ENCODE measurements at regions of chr12 and their contacts with region 1.

Region 1: GRCh38 chr12:6703631-6704030 is 3.0 kb upstream of the PIANP start:
- DNase-seq: no peak
- ATAC-seq: peak; percentile 46
- H3K4me3 ChIP-seq: no peak overlapping the region
- H3K27ac ChIP-seq: no peak overlapping the region
- H3K4me1 ChIP-seq: no peaks in the 10 kb centered on the region
- H3K27me3 ChIP-seq: peaks cover 11% of the 10 kb centered on the region
- CTCF ChIP-seq: no peak

Region 2: GRCh38 chr12:6745741-6746525 is 42.3 kb after region 1 on chr12:
- CTCF ChIA-PET with region 1: interaction called, 13 read pairs
- POLR2A ChIA-PET with region 1: no interaction called
- in situ Hi-C with region 1: no loop called
- intact Hi-C with region 1: no loop called
- DNase-seq: no peak
- ATAC-seq: peak; percentile 54
- H3K4me3 ChIP-seq: no peak overlapping the region
- H3K27ac ChIP-seq: no peak overlapping the region
- H3K4me1 ChIP-seq: no peaks in the 10 kb centered on the region
- H3K27me3 ChIP-seq: no peaks in the 10 kb centered on the region
- CTCF ChIP-seq: no peak

Measured in Panc1 (cell line).